WTC11 (cell line): ENCODE measurements at regions of chr10 and their contacts with region 1.

Region 1: DNA sequence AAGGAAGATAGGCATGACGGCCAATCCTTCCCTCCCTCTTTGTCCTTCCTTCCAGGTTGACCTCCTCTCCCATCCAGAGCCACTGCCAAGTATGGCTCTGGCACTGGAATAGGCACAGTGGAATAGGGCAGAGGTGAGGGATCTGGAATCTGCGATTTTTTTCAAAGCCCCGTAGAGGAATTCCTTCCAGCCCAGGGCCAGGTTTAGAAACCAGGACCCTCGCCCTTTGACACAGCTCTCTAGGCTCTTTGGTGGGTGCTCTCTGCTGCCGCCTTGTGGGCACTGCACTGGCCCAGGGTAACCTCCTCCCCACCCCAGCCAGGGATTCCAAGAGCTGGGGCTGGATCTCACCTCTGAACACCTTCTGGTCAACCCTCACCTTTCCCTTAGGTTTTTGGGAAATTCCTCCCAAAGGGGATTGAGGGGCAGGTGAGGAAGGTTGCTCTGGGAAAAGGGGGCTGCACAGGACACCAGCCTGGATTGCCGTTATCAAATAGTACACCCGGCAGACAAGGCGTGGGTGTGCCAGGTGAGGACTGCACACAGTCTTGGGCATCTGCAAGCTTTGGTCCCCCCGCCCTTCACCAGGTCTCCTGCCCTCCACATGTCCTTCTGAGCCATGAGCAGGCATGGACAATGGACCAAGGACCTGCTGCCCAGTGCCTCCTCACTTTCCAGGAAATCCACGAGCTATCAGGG is 22.8 kb downstream of the C10orf105 start:
- DNase-seq: peak; percentile 91
- ATAC-seq: peak; percentile 97
- H3K4me3 Mint-ChIP-seq: no peak overlapping the region
- H3K27ac Mint-ChIP-seq: no peak overlapping the region
- H3K4me1 Mint-ChIP-seq: no peaks in the 10 kb centered on the region
- H3K27me3 Mint-ChIP-seq: no peaks in the 10 kb centered on the region; the same call in 1 of the 2 replicates
- CTCF ChIP-seq: peak; percentile 83

Region 2: GRCh38 chr10:71326464-71326881 is 370.3 kb before region 1 on chr10:
- CTCF ChIA-PET with region 1: no interaction called
- POLR2A ChIA-PET with region 1: no interaction called
- DNase-seq: no peak
- ATAC-seq: no peak
- H3K4me3 Mint-ChIP-seq: no peak overlapping the region
- H3K27ac Mint-ChIP-seq: no peak overlapping the region
- H3K4me1 Mint-ChIP-seq: no peaks in the 10 kb centered on the region
- H3K27me3 Mint-ChIP-seq: no peaks in the 10 kb centered on the region
- CTCF ChIP-seq: no peak

Region 3: DNA sequence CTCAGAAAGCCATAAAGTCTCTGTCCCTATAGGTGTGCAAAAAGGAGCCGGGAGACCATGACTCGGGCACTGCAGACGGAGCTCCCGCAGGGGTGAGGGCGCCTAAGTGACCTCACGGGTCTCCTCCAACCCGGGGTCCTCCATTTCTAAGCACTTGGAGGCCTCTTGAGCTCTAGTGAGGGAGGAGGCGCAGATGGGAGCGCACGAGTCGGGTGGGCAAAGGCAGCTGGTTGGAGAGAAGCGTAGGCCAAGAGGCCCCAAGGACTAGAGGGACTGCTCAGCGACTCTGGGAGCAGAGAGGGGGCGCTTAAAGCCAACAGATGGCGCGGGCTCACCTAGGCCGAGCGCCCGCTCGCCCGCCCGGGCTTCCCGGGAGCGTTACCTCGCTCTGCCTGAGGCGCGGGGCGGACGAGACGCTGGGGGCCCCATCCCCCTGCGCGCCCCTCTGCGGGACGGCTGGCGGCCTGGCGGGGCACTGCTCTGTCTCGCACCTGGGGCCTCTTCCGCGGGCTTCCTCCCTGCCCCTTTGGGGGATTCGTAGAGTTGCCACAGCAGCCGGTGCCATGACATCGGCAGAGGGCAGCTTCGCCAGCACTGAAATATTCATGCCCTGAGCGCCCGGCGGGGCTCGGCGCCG is 300.6 kb before region 1 on chr10:
- CTCF ChIA-PET with region 1: interaction called, 17 read pairs
- POLR2A ChIA-PET with region 1: no interaction called
- DNase-seq: peak; percentile 76
- ATAC-seq: peak; percentile 86
- H3K4me3 Mint-ChIP-seq: peak overlapping the region; percentile 63
- H3K27ac Mint-ChIP-seq: no peak overlapping the region
- H3K4me1 Mint-ChIP-seq: peaks cover 20% of the 10 kb centered on the region
- H3K27me3 Mint-ChIP-seq: peaks cover 59% of the 10 kb centered on the region
- CTCF ChIP-seq: no peak

Region 4: DNA sequence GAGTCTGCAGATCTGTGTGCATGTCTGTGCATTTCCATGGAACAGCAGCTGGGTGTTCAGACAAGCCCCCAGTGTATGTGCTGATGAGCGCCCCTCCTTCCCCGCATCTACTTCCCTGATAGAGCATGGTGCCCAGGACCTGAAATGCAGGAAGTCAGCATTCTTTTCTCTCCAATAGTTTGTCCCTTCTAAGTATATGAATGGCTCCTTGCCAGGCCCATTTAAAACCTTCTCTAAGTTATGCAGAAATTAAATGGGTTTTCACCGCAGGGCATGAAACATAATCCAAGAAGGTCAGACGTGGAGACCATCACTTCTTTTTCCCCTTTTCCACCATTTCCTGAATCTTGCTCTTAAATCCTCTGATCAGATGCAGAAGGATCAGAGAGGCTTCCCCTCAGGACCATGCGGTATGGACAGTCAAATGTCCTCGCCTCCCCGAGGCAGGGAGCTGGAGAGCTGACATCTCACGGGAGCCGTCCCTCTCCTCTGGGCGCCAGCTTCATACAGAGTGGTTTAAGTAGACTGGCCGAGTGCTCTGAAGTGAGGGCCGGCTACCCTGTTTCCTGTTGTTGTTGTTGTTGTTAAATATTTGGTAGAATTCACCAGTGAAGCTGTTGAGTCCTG is 132.5 kb before region 1 on chr10:
- CTCF ChIA-PET with region 1: interaction called, 24 read pairs
- POLR2A ChIA-PET with region 1: no interaction called
- DNase-seq: no peak
- ATAC-seq: peak; percentile 56
- H3K4me3 Mint-ChIP-seq: no peak overlapping the region
- H3K27ac Mint-ChIP-seq: no peak overlapping the region
- H3K4me1 Mint-ChIP-seq: peaks cover 39% of the 10 kb centered on the region
- H3K27me3 Mint-ChIP-seq: peaks cover 3% of the 10 kb centered on the region
- CTCF ChIP-seq: no peak

Region 5: GRCh38 chr10:71638064-71638821 is 58.5 kb before region 1 on chr10:
- CTCF ChIA-PET with region 1: interaction called, 36 read pairs
- POLR2A ChIA-PET with region 1: no interaction called
- DNase-seq: no peak
- ATAC-seq: peak; percentile 23
- H3K4me3 Mint-ChIP-seq: no peak overlapping the region
- H3K27ac Mint-ChIP-seq: no peak overlapping the region; the same call in 1 of the 2 replicates
- H3K4me1 Mint-ChIP-seq: peaks cover 66% of the 10 kb centered on the region
- H3K27me3 Mint-ChIP-seq: peaks cover 46% of the 10 kb centered on the region
- CTCF ChIP-seq: no peak

Region 6: GRCh38 chr10:71679425-71679824 is 17.4 kb before region 1 on chr10:
- CTCF ChIA-PET with region 1: interaction called, 58 read pairs
- POLR2A ChIA-PET with region 1: no interaction called
- DNase-seq: no peak
- ATAC-seq: no peak
- H3K4me3 Mint-ChIP-seq: no peak overlapping the region
- H3K27ac Mint-ChIP-seq: no peak overlapping the region
- H3K4me1 Mint-ChIP-seq: peaks cover 4% of the 10 kb centered on the region
- H3K27me3 Mint-ChIP-seq: no peaks in the 10 kb centered on the region; the same call in 1 of the 2 replicates
- CTCF ChIP-seq: no peak

Region 7: DNA sequence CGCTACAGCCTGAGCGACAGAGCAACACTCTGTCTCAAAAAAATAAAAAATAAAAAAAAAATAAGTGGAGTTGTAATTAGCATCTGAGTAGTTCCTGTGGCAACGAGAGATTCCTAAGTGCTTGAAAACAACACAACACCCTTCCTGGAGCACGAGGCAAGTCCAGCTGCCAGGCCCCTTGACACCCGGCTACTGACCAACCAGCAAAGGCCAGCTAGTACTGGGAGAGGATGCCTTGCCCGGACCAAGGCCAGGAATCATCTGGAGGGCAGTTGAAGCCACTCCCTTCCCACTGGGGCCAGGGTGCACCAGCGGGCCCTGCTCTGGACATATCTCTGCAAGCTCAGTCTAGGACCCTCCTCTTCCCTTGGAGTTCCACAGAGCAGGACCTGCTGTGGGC is 22.3 kb after region 1 on chr10:
- CTCF ChIA-PET with region 1: interaction called, 34 read pairs
- POLR2A ChIA-PET with region 1: no interaction called
- DNase-seq: no peak
- ATAC-seq: no peak
- H3K4me3 Mint-ChIP-seq: no peak overlapping the region
- H3K27ac Mint-ChIP-seq: no peak overlapping the region
- H3K4me1 Mint-ChIP-seq: peaks cover 10% of the 10 kb centered on the region
- H3K27me3 Mint-ChIP-seq: peaks cover 3% of the 10 kb centered on the region; the same call in 1 of the 2 replicates
- CTCF ChIP-seq: no peak

Region 8: GRCh38 chr10:71788954-71789353 is 92.2 kb after region 1 on chr10:
- CTCF ChIA-PET with region 1: no interaction called
- POLR2A ChIA-PET with region 1: no interaction called
- DNase-seq: no peak
- ATAC-seq: no peak
- H3K4me3 Mint-ChIP-seq: no peak overlapping the region
- H3K27ac Mint-ChIP-seq: no peak overlapping the region
- H3K4me1 Mint-ChIP-seq: no peaks in the 10 kb centered on the region
- H3K27me3 Mint-ChIP-seq: no peaks in the 10 kb centered on the region; the same call in 1 of the 2 replicates
- CTCF ChIP-seq: no peak